ENCODE measurements at regions of chr1 and their contacts with region 1.

Region 1: DNA sequence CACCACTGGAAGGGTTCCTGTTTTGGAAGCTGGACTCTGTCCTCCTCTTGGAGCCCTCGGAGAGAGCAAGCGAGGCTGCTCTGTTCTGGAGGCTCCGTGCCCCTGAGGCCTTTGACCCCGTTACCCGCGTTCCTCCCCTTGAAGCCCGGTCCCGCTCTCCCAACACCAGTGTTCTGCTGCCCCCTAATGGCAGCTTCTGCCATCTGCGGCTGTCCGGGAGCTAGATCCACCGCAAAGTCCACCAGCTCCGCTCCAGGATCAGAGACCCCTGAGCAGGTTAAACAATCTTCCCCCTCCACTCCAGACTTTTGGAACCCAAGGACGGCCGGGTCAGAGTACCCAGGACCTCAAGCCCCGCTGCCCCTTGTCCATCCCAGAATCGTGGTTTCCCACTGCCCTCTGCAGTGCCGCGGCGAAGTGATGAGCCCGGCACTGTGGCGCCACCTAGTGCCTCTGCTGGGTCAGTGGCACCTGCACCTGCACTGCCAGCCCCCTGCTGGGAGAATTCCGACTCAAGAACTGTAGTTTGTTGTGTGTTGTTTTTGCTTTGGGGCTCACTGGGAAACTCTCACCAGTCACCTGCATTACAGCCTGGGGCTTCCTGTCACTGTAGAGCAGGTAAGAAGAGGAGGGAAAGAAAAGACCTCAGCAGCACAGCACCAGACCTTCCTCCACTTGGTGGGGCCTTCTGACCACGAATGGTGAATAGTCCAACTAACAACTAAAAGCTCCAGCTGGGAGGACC is 63.5 kb upstream of the NFASC start:
- DNase-seq: peak; percentile 92
- ATAC-seq: peak; percentile 84
- H3K4me3 Mint-ChIP-seq: peak overlapping the region; percentile 77
- H3K27ac Mint-ChIP-seq: no peak overlapping the region
- H3K4me1 Mint-ChIP-seq: peaks cover 13% of the 10 kb centered on the region
- H3K27me3 Mint-ChIP-seq: peaks cover 15% of the 10 kb centered on the region
- CTCF ChIP-seq: peak; percentile 99

Region 2: DNA sequence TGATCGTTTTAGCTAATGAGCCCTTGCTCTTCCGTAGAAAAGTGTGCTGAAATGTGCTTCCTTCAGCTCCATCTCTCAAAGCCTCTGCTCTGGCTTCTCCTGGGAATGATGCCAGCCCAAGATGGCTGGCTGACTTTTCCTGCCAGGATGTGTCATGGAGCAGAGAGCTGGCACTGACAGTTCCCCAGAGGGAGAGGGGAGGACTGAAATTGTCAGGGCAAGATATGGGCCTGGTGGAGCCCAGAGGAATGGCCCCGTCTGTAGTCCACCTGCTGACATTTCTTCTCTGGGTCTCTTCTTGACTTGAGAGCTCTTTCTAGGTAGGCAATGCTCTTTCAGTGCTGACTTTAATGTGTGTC is 422.1 kb before region 1 on chr1:
- CTCF ChIA-PET with region 1: no interaction called
- POLR2A ChIA-PET with region 1: no interaction called
- DNase-seq: no peak
- ATAC-seq: no peak
- H3K4me3 Mint-ChIP-seq: no peak overlapping the region
- H3K27ac Mint-ChIP-seq: no peak overlapping the region
- H3K4me1 Mint-ChIP-seq: no peaks in the 10 kb centered on the region
- H3K27me3 Mint-ChIP-seq: peaks cover 13% of the 10 kb centered on the region
- CTCF ChIP-seq: no peak

Region 3: DNA sequence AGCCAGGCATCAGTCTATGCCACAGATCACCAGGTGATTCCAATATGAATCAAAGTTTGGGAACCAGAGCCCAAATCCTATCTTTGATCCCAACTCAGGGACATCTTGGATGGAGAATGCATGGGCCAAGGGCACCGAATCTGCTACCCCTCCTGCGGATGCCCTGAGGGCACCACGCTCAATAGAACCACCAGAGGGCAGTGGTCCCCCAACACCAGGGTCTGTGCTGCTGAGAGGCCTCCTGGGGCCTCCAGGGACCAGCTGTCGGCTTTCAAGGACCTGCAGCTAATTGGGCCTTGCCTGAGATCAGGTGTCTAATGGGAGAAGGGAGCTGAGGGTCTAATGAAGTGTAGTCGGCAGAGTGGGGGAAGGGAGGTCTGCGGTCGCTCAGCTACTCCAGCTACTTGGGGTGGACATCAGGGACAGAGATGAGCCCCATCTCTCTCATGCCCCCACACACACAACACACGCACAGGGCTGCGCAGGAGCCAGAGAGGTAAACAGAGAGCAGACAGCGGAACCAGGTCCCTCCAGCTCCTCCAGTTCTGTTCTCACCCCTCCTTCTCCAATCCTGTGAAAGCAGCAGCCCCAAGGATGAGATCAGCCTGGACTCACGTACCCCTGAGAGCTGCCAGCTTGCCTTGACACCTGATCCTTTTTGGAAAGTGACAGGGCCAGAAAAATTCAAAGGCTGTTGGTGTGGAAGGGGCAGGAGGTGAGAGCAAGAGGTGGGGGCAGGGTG is 360.6 kb before region 1 on chr1:
- CTCF ChIA-PET with region 1: interaction called, 23 read pairs
- POLR2A ChIA-PET with region 1: no interaction called
- DNase-seq: peak; percentile 90
- ATAC-seq: peak; percentile 88
- H3K4me3 Mint-ChIP-seq: no peak overlapping the region
- H3K27ac Mint-ChIP-seq: peak overlapping the region; percentile 84
- H3K4me1 Mint-ChIP-seq: peaks cover 35% of the 10 kb centered on the region
- H3K27me3 Mint-ChIP-seq: no peaks in the 10 kb centered on the region
- CTCF ChIP-seq: peak; percentile 57

Region 4: DNA sequence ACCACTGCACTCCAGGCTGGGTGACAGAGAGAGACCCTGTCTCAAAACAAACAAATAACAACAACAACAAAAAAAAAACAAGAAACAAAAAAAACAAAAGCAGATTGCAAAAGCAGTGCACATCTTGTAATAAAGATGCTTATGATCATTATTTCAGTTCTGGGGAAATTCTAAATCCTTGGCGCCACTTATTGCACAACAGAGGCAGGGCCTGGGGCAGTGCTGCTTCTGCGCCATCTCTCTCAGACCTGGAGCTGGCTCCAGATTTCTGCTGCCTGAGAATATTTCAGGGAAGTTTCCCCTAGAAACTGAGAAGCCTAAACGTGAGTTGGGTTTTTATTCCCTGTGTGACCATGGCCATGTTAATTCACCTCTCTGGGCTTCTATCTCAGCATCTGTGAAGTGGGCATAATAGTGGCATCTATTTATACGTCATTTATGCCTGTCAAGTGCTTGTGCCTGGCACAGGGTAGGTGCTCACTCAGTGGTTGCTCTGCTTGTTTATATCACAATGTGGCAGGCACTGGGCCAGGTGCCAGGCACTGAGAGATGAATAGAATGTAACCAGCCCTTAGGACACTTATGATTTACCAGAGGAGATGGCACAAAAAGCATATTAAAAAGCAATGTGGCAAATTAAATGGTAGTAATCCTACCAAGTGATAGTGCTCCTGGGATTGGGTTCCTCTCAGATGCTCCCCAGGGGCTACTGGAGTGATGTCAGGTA is 223.0 kb before region 1 on chr1:
- CTCF ChIA-PET with region 1: interaction called, 18 read pairs
- POLR2A ChIA-PET with region 1: no interaction called
- DNase-seq: no peak
- ATAC-seq: no peak
- H3K4me3 Mint-ChIP-seq: no peak overlapping the region
- H3K27ac Mint-ChIP-seq: no peak overlapping the region; the same call in 1 of the 2 replicates
- H3K4me1 Mint-ChIP-seq: peaks cover 35% of the 10 kb centered on the region
- H3K27me3 Mint-ChIP-seq: peaks cover 6% of the 10 kb centered on the region
- CTCF ChIP-seq: no peak

Region 5: GRCh38 chr1:204640578-204640977 is 166.5 kb before region 1 on chr1:
- CTCF ChIA-PET with region 1: interaction called, 11 read pairs
- POLR2A ChIA-PET with region 1: no interaction called
- DNase-seq: no peak
- ATAC-seq: peak; percentile 60
- H3K4me3 Mint-ChIP-seq: no peak overlapping the region
- H3K27ac Mint-ChIP-seq: no peak overlapping the region; the same call in 1 of the 2 replicates
- H3K4me1 Mint-ChIP-seq: no peaks in the 10 kb centered on the region
- H3K27me3 Mint-ChIP-seq: peaks cover 18% of the 10 kb centered on the region
- CTCF ChIP-seq: no peak

Region 6: DNA sequence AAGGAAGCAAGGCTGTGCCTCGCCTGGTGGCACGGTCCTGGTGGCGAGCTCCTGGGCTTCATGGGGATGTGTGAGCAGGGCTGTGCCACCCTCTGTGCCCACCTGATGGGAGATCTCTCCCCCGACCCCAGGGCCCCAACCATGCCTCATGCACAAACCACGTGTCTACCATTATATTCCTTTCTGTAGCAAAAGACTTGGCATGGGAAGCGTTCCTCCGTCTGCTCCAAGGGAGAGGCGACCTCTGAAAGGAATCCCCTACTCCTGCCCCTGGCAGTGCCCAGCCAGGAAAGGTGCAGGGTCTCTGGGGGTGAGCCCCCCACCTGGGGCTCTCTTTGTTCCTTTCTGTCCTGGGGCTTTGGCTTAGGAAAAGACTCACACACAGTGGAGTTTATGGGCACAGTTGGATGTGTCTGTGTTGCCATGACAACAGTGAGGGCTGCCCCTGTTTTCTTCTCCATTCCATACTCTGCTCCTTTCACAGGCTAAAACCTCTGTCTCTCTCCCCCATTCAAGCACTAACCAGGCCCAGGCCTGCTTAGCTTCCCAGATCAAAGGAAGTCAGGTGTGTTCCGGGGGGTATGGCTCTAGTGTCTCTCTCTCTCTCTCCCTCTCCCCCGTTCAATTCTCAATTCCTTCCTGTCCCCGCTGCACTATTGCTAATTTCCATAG is 100.1 kb before region 1 on chr1:
- CTCF ChIA-PET with region 1: interaction called, 17 read pairs
- POLR2A ChIA-PET with region 1: no interaction called
- DNase-seq: peak; percentile 52
- ATAC-seq: peak; percentile 20
- H3K4me3 Mint-ChIP-seq: 0 out of 2 replicates have a peak overlapping the region, but pooled peaks have one; percentile 4
- H3K27ac Mint-ChIP-seq: no peak overlapping the region
- H3K4me1 Mint-ChIP-seq: peaks cover 63% of the 10 kb centered on the region
- H3K27me3 Mint-ChIP-seq: peaks cover 93% of the 10 kb centered on the region
- CTCF ChIP-seq: no peak

Region 7: GRCh38 chr1:204791453-204792353 is 15.4 kb before region 1 on chr1:
- CTCF ChIA-PET with region 1: interaction called, 53 read pairs
- POLR2A ChIA-PET with region 1: no interaction called
- DNase-seq: peak; percentile 95
- ATAC-seq: peak; percentile 96
- H3K4me3 Mint-ChIP-seq: no peak overlapping the region
- H3K27ac Mint-ChIP-seq: no peak overlapping the region
- H3K4me1 Mint-ChIP-seq: peaks cover 12% of the 10 kb centered on the region
- H3K27me3 Mint-ChIP-seq: peaks cover 11% of the 10 kb centered on the region
- CTCF ChIP-seq: peak; percentile 90

Region 8: GRCh38 chr1:204975570-204976235 is 168.6 kb after region 1 on chr1:
- CTCF ChIA-PET with region 1: interaction called, 22 read pairs
- POLR2A ChIA-PET with region 1: no interaction called
- DNase-seq: peak; percentile 73
- ATAC-seq: peak; percentile 88
- H3K4me3 Mint-ChIP-seq: no peak overlapping the region
- H3K27ac Mint-ChIP-seq: no peak overlapping the region
- H3K4me1 Mint-ChIP-seq: no peaks in the 10 kb centered on the region
- H3K27me3 Mint-ChIP-seq: no peaks in the 10 kb centered on the region
- CTCF ChIP-seq: peak; percentile 84

Measured in WTC11 (cell line).